HEK293 (cell line): ENCODE measurements at regions of chr6 and their contacts with region 1.

Region 1: GRCh38 chr6:41920921-41921711 is at the starts of genes BYSL and MED20:
- H3K4me3 ChIP-seq: peak within 1 kb of the TSS; percentile 88
- H3K27ac ChIP-seq: peak within 1 kb of the TSS; percentile 80
- H3K4me1 ChIP-seq: peaks cover 9% of the 10 kb centered on the region
- CTCF ChIP-seq: peak; percentile 97

Region 2: DNA sequence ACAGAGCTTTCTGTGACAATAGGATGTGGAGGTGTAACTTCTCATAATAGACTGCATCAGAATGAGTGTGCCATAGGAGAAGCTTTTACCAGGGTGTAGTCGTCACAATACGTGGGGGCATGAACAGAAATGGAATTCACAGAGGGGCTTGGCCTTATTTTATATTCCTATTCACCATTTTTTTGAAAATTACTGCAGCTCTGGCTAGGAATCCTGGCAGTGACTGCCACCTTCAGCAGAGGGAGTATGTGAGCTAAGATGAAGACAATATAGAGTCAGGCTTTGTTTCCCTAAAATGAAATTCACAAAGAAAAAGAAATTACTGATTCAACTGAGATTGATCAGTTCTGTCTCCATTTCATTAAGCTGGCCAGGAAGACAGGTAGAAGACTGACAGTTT is 119.7 kb before region 1 on chr6:
- CTCF ChIA-PET with region 1: interaction called, 24 read pairs
- POLR2A ChIA-PET with region 1: interaction called, 9 read pairs
- H3K4me3 ChIP-seq: no peak overlapping the region
- H3K27ac ChIP-seq: no peak overlapping the region
- H3K4me1 ChIP-seq: no peaks in the 10 kb centered on the region
- CTCF ChIP-seq: no peak

Region 3: DNA sequence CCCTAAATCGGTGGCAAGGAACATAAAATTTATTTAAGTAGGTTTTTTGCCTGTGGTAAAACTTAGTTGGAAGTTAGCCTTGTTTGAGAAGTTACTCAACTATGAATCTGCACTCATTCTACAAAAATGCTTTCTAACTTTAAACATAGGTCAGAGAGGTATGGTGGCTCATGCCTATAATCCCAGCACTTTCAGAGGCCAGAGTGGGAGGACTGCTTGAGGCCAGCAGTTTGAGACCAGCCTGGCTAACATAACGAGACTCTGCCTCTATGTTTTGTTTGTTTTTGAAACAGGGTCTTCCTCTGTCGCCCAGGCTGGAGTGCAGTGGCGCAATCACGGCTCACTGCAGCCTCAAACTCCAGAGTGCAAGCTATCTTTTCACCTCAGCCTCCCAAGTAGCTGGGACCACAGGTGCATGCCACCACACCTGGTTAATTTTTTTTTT is 42.1 kb before region 1 on chr6:
- CTCF ChIA-PET with region 1: interaction called, 12 read pairs
- POLR2A ChIA-PET with region 1: interaction called, 4 read pairs
- H3K4me3 ChIP-seq: no peak overlapping the region
- H3K27ac ChIP-seq: no peak overlapping the region
- H3K4me1 ChIP-seq: no peaks in the 10 kb centered on the region
- CTCF ChIP-seq: no peak

Region 4: DNA sequence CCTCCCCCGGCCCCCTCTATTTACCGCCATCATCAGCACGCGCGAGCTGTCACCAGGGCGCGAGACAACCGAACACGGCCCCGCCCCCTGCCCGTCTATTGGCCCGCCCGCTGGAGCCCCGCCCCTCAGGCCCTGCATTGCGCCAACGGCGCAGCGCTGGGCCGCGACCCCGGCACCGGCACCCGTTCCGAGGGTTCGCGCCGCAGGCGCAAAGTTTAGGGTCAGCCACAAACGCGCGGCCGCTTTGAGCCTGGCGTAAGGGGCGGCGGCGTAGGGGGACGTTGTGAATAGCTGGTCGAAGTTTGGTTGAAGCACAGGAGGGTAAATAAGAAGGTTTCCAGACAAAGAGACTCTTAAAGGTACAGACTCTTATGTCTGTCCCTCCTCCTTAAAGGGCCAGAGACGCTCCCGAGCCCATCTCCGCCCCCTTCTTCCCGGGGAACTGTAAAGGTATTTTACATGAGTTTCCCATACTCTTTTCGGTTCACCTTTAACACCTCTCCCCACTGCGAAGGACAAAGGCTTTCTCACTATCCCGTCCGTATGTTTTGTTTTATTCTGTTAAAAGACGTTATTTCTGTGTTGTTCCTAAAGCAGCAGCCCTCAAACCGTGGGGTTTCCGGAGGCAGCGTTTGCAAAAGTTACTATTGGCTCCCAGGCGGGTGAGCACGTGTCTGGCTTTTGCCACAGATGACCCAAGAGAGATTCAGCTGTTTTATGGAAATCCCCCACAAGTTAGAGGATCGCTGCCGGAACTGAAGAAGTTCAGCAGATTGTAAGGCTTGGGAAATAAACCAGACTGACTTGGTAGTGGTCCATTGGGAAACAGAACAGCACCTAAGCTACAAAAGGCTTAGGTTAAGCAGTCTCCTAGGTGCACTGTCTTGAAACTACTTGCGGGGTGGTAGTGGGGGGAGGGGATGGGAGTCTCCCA is 25.5 kb before region 1 on chr6 and contains the start of gene USP49:
- CTCF ChIA-PET with region 1: interaction called, 17 read pairs
- POLR2A ChIA-PET with region 1: interaction called, 14 read pairs
- H3K4me3 ChIP-seq: peak within 1 kb of the TSS; percentile 89
- H3K27ac ChIP-seq: peak within 1 kb of the TSS; percentile 61
- H3K4me1 ChIP-seq: peaks cover 9% of the 10 kb centered on the region; the same call in 1 of the 2 replicates
- CTCF ChIP-seq: no peak

Region 5: GRCh38 chr6:41936073-41936837 is 15.1 kb after region 1 on chr6:
- CTCF ChIA-PET with region 1: interaction called, 160 read pairs
- POLR2A ChIA-PET with region 1: interaction called, 20 read pairs
- H3K4me3 ChIP-seq: no peak overlapping the region
- H3K27ac ChIP-seq: no peak overlapping the region
- H3K4me1 ChIP-seq: peaks cover 20% of the 10 kb centered on the region
- CTCF ChIP-seq: peak; percentile 56; the same call in 1 of the 2 replicates

Region 6: GRCh38 chr6:42043787-42044475 is 122.8 kb after region 1 on chr6:
- CTCF ChIA-PET with region 1: interaction called, 43 read pairs
- POLR2A ChIA-PET with region 1: interaction called, 5 read pairs
- H3K4me3 ChIP-seq: no peak overlapping the region
- H3K27ac ChIP-seq: no peak overlapping the region
- H3K4me1 ChIP-seq: peaks cover 18% of the 10 kb centered on the region
- CTCF ChIP-seq: peak; percentile 93

Region 7: DNA sequence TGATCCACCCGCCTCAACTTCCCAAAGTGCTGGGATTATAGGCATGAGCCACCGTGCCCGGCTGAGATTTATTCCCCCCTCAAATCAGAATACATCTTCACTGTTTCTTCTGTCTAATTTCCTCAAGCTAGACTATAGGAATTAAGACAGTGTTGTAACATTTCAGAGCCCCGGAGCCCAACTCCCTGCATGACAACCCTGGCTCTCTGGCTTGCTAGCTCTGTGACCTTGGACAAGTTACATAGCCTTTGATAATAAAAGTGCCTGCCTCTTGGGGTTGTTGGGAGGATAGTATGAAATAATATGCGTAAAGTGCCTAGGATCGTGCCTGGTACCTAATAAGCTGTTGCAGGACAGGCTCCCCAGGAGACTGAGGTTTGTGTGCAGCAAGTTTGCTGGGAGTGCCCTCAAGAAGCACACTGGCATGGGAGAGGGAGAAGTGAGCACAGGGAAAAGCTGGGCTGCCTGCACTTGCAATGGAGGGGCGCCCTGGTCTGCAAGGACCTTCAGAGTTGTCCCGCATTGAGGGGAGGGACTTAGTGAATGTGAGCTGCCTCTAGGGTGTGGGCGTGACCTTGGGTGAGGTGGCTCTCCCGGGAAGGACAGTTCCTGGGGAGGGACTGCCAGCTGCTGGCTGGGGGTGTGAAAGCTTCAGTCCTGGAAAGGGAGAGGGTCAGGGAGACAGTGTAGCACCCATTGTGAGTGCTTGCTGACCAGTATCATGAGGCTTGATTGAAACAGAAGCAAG is 172.6 kb after region 1 on chr6:
- CTCF ChIA-PET with region 1: no interaction called
- POLR2A ChIA-PET with region 1: no interaction called
- H3K4me3 ChIP-seq: no peak overlapping the region
- H3K27ac ChIP-seq: no peak overlapping the region
- H3K4me1 ChIP-seq: no peaks in the 10 kb centered on the region
- CTCF ChIP-seq: no peak

Region 8: GRCh38 chr6:42304053-42304712 is 383.1 kb after region 1 on chr6:
- CTCF ChIA-PET with region 1: no interaction called
- POLR2A ChIA-PET with region 1: no interaction called
- H3K4me3 ChIP-seq: no peak overlapping the region
- H3K27ac ChIP-seq: no peak overlapping the region
- H3K4me1 ChIP-seq: no peaks in the 10 kb centered on the region
- CTCF ChIP-seq: no peak